ENCODE measurements at regions of chr6 and their contacts with region 1.

Region 1: GRCh38 chr6:34526992-34527728 is 29.0 kb downstream of the SPDEF start:
- DNase-seq: peak; percentile 93
- H3K4me3 Mint-ChIP-seq: peak overlapping the region; percentile 10
- H3K27ac Mint-ChIP-seq: no peak overlapping the region
- H3K4me1 Mint-ChIP-seq: peaks cover 3% of the 10 kb centered on the region
- H3K27me3 Mint-ChIP-seq: peaks cover 5% of the 10 kb centered on the region

Region 2: DNA sequence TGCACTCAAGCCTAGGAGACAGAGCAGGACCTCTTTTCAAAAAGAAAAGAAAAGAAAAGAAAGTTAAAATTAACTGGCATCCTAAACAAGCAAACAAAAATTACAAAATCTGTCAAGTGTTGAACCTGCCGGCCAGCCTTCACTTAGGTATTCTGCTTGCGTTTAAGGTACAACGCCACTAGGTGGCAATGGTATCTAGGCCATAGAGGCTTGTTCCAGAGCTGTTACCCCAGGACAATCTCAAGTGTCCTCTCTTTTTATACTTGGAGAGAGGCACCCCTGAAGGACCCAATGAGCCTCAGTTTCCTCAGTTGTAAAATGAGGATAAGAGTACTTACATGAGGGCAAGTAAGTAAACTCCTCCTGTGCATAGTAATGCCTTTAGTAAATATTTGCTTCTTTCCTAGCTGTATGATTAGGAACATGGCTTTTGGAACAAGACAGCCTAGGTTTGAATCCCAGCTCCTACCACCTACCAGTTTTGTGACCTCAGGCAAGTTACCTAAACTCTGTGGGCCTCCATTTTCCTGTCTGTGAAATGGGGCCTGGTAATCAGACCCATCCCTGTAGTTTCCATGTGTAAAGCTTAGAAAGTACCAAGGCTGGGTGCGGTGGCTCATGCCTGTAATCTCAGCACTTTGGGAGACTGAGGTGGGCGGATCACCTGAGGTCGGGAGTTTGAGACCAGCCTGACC is 67.1 kb before region 1 on chr6:
- intact Hi-C with region 1: loop called (anchors 2 kb)
- DNase-seq: peak; percentile 19
- H3K4me3 Mint-ChIP-seq: no peak overlapping the region
- H3K27ac Mint-ChIP-seq: no peak overlapping the region
- H3K4me1 Mint-ChIP-seq: peaks cover under 1% of the 10 kb centered on the region
- H3K27me3 Mint-ChIP-seq: peaks cover 7% of the 10 kb centered on the region

Region 3: DNA sequence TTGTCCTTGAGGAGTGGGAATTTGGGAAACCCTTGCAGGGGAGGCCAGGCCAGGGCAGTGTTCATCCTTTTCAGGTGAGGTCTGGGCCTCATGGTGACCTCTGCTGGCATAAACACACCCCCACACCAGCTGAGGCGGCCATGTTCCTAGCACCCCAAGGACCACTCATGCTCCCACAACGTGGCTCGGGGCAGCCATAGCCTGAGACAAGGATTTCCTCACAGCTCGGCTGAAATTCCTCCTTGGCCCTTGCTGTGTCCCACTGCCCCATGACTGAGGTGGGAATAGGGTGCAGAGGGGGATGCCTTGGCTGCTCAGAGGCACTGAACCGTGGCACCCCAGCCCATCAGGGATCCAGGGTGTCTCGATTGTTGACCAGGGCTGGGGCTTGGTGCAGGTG is 56.3 kb after region 1 on chr6:
- intact Hi-C with region 1: no loop called
- DNase-seq: no peak
- H3K4me3 Mint-ChIP-seq: no peak overlapping the region
- H3K27ac Mint-ChIP-seq: no peak overlapping the region
- H3K4me1 Mint-ChIP-seq: peaks cover 9% of the 10 kb centered on the region
- H3K27me3 Mint-ChIP-seq: no peaks in the 10 kb centered on the region

Region 4: GRCh38 chr6:34610819-34611477 is 83.8 kb after region 1 on chr6:
- intact Hi-C with region 1: loop called (anchors 1 kb)
- DNase-seq: no peak
- H3K4me3 Mint-ChIP-seq: no peak overlapping the region
- H3K27ac Mint-ChIP-seq: no peak overlapping the region
- H3K4me1 Mint-ChIP-seq: peaks cover 24% of the 10 kb centered on the region
- H3K27me3 Mint-ChIP-seq: no peaks in the 10 kb centered on the region

Region 5: DNA sequence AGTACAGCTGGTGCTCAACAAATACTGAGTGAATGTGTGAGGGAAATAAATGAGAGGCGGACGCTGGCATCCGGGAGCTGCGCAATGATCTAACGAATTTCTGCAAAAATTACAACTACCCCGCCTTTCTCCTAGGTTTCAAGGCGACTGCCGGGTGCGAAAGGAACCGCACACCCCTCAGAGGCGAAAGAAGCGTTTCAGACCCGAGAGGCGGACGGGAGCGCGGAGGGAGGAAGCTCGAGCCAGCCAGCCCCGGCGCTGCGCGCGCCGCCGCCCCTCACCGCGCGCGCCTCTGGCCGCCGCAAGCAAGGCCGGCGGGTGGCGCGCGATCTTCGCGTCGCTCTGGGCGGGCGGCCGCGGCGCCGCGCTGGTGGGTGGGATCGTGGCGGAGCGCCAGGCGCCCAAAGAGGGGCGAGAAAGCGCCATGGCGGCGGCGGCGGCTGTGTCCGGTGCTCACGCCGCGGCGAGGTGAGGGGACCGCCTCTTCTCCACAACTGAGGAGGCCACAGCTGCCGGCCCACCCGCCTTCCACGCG is 264.6 kb after region 1 on chr6 and contains the start of gene BLTP3A:
- intact Hi-C with region 1: loop called (anchors 2 kb)
- DNase-seq: peak; percentile 77
- H3K4me3 Mint-ChIP-seq: peak within 1 kb of the TSS; percentile 94
- H3K27ac Mint-ChIP-seq: peak within 1 kb of the TSS; percentile 92
- H3K4me1 Mint-ChIP-seq: peaks cover 21% of the 10 kb centered on the region
- H3K27me3 Mint-ChIP-seq: peaks cover 5% of the 10 kb centered on the region
- total RNA-seq, gene BLTP3A: 15.1 and 16.3 TPM in 2 replicates

Region 6: DNA sequence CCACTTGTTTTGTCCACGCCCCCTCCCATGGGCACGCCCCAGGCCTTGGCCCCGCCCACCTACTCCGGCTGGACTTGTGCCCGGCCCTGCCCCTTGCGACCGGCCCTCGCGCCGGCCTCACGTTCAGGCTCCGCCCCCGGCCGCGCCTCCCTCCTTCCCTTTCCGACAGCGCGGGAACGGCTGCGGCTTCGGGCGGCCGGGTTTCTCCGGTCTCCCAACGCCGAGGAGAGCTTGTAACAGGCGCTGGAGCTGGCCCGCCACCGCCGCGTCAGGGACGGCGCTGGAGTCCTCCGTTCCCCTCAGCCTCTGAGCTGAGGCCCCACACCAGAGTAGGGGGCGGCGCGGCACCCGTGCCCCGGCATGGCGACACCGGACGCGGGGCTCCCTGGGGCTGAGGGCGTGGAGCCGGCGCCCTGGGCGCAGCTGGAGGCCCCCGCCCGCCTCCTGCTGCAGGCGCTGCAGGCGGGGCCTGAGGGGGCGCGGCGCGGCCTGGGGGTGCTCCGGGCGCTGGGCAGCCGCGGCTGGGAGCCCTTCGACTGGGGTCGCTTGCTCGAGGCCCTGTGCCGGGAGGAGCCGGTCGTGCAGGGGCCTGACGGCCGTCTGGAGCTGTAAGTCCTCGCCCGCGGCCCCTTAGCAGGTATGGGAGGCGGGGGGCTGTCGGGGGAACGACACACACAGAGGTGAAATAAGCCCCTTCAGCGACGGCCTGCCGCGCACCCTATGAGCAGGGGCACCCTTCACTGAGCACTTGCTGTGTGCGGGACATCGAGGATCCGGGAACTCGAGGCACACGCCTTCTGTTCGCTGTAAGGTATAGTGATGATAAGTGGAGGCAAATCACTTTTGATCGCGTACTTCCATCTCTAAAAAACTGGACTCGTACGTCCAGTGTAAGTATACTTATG is 925.3 kb after region 1 on chr6 and contains the start of gene FANCE:
- intact Hi-C with region 1: loop called (anchors 5 kb)
- DNase-seq: peak; percentile 91
- H3K4me3 Mint-ChIP-seq: peak within 1 kb of the TSS; percentile 84
- H3K27ac Mint-ChIP-seq: peak within 1 kb of the TSS; percentile 63
- H3K4me1 Mint-ChIP-seq: peaks cover 38% of the 10 kb centered on the region
- H3K27me3 Mint-ChIP-seq: peaks cover 10% of the 10 kb centered on the region
- total RNA-seq, gene FANCE: 20.6 and 21.1 TPM in 2 replicates